Activated T-helper 2 cell treated with anti-CD3 and anti-CD28 coated beads, Interferon-gamma antibody, Interleukin-2, Interleukin-4, amounts not matched to agents 10 μg/mL and 5 μg/mL and 100 μg/mL, durations not matched to agents 14 hours and 24 hours and 36 hours (primary cell): ENCODE measurements at regions of chr10 and their contacts with region 1.

Region 1: DNA sequence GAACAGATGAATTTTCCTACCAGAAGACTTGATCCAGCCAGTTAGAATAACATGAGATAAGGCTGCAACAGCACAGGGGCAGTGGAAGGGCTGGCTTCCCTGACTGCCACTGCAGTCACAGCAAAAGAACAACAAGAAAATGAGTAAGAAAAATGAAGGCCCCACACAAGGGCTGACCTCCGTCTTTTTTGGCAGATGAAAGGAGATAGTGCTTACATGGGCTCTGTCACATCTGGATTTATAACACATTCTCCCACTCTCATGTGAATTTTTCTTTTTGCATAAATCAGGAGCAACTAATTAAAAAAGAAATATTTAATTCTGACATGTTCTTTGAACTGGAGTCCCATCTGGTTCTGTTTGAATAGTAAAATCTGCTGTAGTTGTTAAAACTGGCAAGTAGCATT is 99.6 kb downstream of the NRP1 start:
- DNase-seq: no peak
- H3K4me3 Mint-ChIP-seq: no peak overlapping the region
- H3K27ac Mint-ChIP-seq: no peak overlapping the region
- H3K4me1 Mint-ChIP-seq: peaks cover 5% of the 10 kb centered on the region
- H3K27me3 Mint-ChIP-seq: peaks cover 50% of the 10 kb centered on the region

Region 2: GRCh38 chr10:33265621-33266020 is 30.8 kb after region 1 on chr10:
- intact Hi-C with region 1: loop called (anchors 5 kb)
- DNase-seq: peak; percentile 14
- H3K4me3 Mint-ChIP-seq: no peak overlapping the region
- H3K27ac Mint-ChIP-seq: no peak overlapping the region
- H3K4me1 Mint-ChIP-seq: peaks cover 22% of the 10 kb centered on the region
- H3K27me3 Mint-ChIP-seq: peaks cover 37% of the 10 kb centered on the region